Caco-2 (cell line): ENCODE measurements at regions of chr12 and their contacts with region 1.

Region 1: GRCh38 chr12:54452628-54453027 is 20.8 kb downstream of the GTSF1 start:
- DNase-seq: no peak
- H3K4me3 ChIP-seq: no peak overlapping the region
- H3K4me3 Mint-ChIP-seq: no peak overlapping the region
- H3K27ac Mint-ChIP-seq: no peak overlapping the region
- H3K4me1 ChIP-seq: peaks cover 18% of the 10 kb centered on the region
- H3K4me1 Mint-ChIP-seq: no peaks in the 10 kb centered on the region
- H3K27me3 ChIP-seq: no peaks in the 10 kb centered on the region
- H3K27me3 Mint-ChIP-seq: no peaks in the 10 kb centered on the region
- CTCF ChIP-seq: no peak

Region 2: DNA sequence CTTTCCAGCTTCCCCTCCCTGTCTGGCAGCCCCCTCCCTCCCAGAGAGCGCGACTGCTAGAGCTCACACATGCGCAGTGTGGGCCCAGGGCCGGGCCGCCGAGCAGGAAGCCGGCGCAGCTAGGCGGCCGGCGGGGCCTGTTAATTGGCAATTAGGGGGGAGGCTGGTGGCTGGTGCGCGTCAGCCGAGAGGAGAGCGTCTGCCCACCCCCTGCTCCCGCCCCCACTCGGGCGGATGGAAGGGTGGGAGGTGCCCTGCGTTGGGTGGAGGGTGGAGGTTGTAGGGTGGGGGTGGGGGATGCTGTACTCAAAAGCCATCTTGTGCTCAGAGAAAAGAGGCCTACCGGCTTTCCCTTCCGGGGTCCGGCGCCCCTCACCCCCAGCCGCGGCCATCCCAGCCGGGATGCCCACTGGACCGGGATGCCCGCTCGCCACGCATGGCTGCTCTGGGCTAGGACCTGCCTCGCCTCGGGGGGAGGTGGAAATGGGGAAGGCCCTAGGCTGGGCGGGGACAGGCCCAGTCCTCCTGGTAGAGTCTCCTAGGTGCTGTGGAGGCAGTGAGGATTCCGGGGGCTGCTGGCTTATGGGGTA is 434.7 kb before region 1 on chr12:
- CTCF ChIA-PET with region 1: no interaction called
- POLR2A ChIA-PET with region 1: no interaction called
- intact Hi-C with region 1: no loop called
- DNase-seq: peak; percentile 87
- H3K4me3 ChIP-seq: peak overlapping the region; percentile 58
- H3K4me3 Mint-ChIP-seq: peak overlapping the region; percentile 98
- H3K27ac Mint-ChIP-seq: peak overlapping the region; percentile 83
- H3K4me1 ChIP-seq: peaks cover 30% of the 10 kb centered on the region
- H3K4me1 Mint-ChIP-seq: peaks cover 27% of the 10 kb centered on the region
- H3K27me3 ChIP-seq: no peaks in the 10 kb centered on the region
- H3K27me3 Mint-ChIP-seq: no peaks in the 10 kb centered on the region
- CTCF ChIP-seq: no peak

Region 3: DNA sequence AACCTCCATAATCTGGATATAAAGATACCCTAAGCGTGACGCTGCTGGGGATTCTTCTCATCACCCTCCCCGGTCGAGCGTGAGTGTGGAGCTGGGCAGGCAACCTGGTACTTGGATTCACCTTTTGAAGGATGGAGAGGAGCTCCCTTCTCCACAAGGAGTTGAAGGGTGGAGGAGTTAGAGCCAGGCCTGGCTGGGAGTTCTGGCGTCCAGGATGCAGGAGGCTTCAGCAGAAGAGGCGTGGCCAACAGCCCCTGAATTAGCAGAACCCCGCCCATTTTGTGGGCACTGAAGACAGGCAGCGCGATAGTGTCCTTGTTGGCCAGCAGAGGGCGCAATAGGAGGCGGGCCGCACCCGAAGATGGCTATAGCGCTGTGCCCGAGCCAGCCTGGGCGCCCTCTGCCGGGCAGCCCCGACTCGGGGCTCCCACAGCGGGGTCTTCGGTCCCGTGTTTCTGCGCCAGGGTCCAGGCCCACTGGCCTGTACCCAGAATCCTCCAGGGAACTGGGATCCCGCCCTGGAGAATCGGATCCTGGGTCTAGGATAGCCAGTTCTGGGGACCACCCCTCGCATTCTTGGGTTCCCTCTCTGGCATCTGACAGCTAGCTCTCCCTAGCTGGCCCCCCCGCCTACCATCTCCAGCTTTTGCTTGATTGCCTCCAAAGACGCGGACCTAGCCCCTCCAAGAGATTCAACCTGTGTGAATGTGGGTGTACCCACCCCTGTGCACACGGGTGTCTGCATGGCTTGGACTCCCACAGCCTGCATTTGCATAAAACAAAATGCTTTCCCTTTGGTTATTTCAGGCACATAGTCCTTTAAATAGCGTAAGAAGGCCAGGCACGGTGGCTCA is 237.8 kb before region 1 on chr12:
- CTCF ChIA-PET with region 1: no interaction called
- POLR2A ChIA-PET with region 1: no interaction called
- intact Hi-C with region 1: no loop called
- DNase-seq: peak; percentile 89 to 92
- H3K4me3 ChIP-seq: 0 out of 2 replicates have a peak overlapping the region, but pooled peaks have one; percentile 5
- H3K4me3 Mint-ChIP-seq: peak overlapping the region; percentile 42
- H3K27ac Mint-ChIP-seq: no peak overlapping the region
- H3K4me1 ChIP-seq: no peaks in the 10 kb centered on the region
- H3K4me1 Mint-ChIP-seq: no peaks in the 10 kb centered on the region
- H3K27me3 ChIP-seq: no peaks in the 10 kb centered on the region
- H3K27me3 Mint-ChIP-seq: no peaks in the 10 kb centered on the region
- CTCF ChIP-seq: peak; percentile 97 to 98

Region 4: GRCh38 chr12:54439521-54440255 is 12.9 kb before region 1 on chr12:
- CTCF ChIA-PET with region 1: interaction called, 15 read pairs
- POLR2A ChIA-PET with region 1: no interaction called
- intact Hi-C with region 1: no loop called
- DNase-seq: peak in 1 of 2 experiments; percentile 35
- H3K4me3 ChIP-seq: no peak overlapping the region
- H3K4me3 Mint-ChIP-seq: no peak overlapping the region
- H3K27ac Mint-ChIP-seq: no peak overlapping the region
- H3K4me1 ChIP-seq: no peaks in the 10 kb centered on the region
- H3K4me1 Mint-ChIP-seq: no peaks in the 10 kb centered on the region
- H3K27me3 ChIP-seq: no peaks in the 10 kb centered on the region
- H3K27me3 Mint-ChIP-seq: no peaks in the 10 kb centered on the region
- CTCF ChIP-seq: peak; percentile 76 to 81